Activated B cell treated with CpG ODN at 0.5 μM for 24 hours (primary cell): ENCODE measurements at regions of chr19 and their contacts with region 1.

Region 1: DNA sequence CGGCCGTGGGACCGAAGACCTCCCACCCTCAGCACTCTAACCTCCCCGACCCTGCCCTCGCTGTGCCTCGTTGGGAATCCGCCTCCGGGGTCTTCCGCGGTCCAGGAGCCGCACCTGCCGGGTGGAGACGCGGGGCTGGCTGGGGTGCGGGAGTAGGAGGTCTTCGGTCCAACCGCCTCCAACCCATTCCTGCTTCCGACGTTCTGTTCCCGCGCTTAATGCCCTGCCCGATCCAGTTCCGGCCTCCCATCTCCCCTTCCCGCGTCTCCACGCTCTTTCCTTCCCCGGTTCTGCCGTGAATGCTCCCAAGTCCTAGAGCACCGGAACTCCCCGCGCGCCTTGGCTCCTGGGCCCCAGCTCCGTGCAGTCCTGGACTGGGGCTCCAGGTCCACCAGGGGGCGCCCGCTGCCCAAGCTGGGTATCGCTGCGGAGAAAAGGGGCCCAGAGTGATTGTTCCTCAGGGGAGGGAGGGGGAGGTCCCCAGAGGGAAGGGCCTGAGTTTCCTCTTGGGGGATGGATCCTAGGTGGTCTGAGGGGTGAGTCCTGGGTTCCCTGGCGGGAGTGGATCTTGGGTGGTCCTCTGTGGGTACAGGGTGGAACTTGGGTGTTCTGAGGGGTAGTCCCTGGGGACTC is 14.1 kb upstream of the TNFSF9 start:
- DNase-seq: peak; percentile 92
- ATAC-seq: peak; percentile 63
- H3K4me3 Mint-ChIP-seq: peak overlapping the region; percentile 97
- H3K27ac Mint-ChIP-seq: peak overlapping the region; percentile 59
- H3K4me1 Mint-ChIP-seq: peaks cover 45% of the 10 kb centered on the region
- H3K27me3 Mint-ChIP-seq: no peaks in the 10 kb centered on the region
- CTCF ChIP-seq: peak; percentile 84

Region 2: DNA sequence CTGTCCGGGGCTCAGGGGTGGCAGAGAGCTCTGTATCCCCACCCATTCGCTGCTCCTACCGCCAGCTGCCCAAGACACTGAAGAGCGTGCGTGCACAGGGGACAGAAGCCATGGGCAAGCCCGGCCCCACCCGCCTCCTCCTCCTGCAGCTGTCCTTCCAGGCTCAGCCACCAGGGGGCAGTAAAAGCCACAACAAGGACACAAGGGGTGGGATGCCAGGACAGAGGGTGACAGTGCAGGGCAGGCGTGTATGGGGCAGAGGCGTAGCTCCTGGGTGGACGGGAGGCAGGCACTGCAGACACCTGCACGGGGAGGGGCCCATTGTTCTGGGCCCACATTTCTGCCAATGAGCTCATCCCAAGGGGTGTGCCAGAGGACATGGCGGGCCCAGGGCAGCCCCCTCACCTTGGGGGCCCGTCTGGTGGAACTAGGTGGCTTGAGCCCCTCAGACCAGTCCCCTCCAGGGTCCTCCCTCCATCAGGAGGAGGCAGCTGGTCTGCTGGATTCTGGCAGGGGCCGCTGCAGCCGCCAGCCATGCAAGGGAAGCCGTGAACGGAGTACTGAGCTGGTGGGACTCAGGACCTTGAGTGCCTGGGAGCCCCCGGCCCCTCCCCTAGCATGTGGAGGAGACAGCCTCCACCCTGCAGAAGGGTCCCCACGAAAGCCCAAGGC is 298.1 kb before region 1 on chr19:
- CTCF ChIA-PET with region 1: interaction called, 5 read pairs
- POLR2A ChIA-PET with region 1: no interaction called
- intact Hi-C with region 1: loop called (anchors 5 kb)
- DNase-seq: peak; percentile 79
- ATAC-seq: peak; percentile 90
- H3K4me3 Mint-ChIP-seq: no peak overlapping the region
- H3K27ac Mint-ChIP-seq: no peak overlapping the region
- H3K4me1 Mint-ChIP-seq: no peaks in the 10 kb centered on the region
- H3K27me3 Mint-ChIP-seq: no peaks in the 10 kb centered on the region
- CTCF ChIP-seq: no peak

Region 3: DNA sequence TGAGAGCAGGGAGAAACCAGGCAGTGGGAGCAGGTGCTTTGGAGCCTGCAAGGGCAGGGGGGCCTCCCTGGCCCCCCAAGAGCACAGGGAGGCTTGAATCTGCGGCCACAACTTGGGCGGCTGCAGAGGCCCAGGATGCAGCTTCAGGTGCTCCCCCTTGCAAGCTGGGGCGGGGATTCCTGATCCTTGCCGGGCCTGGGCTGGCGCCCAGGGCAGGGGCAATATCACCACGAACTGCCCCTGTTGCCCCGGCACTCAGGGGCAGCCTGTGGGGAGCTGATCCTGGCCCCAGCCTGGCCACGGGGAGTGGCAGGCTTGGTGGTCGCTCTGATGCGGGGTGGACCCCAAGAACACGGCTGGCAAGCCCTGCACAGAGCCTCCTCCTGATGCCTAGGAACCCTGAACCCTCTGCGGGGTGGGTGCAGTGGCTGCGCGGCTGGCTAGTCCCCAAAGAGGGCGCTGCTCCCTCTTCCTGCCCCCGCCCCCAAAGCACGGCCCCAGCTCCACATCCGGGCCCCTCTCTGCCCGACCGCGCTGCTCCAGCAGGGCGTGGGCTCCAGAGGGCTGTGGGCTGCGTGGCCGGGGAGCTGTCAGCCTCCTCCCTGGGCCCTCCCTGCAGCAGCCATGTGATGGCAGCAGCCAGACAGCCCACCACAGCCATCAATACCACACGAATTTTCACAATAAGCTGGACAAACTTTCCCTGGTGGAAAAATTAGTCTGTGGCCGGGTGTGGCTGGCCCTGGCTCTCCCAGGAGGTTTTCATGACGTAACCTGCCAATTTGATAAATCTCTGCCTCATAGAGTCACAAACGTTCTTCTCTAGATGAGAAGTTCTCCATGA is 35.1 kb after region 1 on chr19:
- CTCF ChIA-PET with region 1: interaction called, 8 read pairs
- POLR2A ChIA-PET with region 1: interaction called, 5 read pairs
- intact Hi-C with region 1: loop called (anchors 5 kb)
- DNase-seq: peak; percentile 35
- ATAC-seq: peak; percentile 88
- H3K4me3 Mint-ChIP-seq: peak overlapping the region; percentile 19
- H3K27ac Mint-ChIP-seq: no peak overlapping the region
- H3K4me1 Mint-ChIP-seq: peaks cover 9% of the 10 kb centered on the region
- H3K27me3 Mint-ChIP-seq: no peaks in the 10 kb centered on the region
- CTCF ChIP-seq: no peak

Region 4: DNA sequence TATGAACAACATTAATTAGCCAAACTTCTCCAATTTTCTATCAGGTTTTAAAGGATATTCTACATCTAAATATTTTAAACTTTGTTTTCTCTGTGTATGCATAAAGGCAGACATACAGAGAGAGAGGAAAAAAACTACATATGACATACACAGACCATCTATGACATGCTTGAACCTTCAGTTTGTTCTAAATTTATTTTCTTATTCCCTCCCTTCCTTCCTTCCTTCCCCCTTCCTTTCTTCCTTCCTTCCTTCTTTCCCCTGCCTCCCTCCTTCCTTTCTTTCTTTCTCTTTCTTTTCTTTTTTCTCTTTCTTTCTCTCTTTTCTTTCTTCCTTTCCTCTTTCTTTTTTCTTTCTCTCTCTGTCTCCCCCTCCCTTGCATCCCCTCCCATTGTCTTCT is 110.0 kb after region 1 on chr19:
- CTCF ChIA-PET with region 1: interaction called, 72 read pairs
- POLR2A ChIA-PET with region 1: interaction called, 24 read pairs
- intact Hi-C with region 1: no loop called
- DNase-seq: no peak
- ATAC-seq: no peak
- H3K4me3 Mint-ChIP-seq: no peak overlapping the region
- H3K27ac Mint-ChIP-seq: no peak overlapping the region
- H3K4me1 Mint-ChIP-seq: peaks cover 16% of the 10 kb centered on the region
- H3K27me3 Mint-ChIP-seq: peaks cover 3% of the 10 kb centered on the region
- CTCF ChIP-seq: no peak

Region 5: DNA sequence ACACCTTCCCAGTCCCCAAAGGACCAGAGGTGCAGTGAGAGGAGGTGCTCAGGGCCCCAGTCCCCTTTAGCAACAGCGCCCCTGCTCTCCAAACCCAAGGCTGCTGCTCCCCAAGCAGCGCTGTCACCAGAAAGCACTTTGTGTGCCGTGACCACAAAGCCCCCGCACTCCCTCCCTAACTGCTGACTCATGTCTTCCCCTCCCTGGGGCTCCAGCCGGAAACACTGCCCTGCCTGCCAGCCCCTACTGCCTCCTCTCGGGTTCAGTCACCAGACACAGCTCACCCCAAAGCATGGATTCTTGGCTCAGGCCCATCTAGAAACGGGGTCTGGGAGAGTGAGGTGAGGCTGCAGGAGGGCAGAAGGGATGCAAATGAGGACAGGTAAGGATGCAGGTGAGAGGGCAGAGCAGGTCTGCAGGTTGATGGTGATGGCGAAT is 158.1 kb after region 1 on chr19:
- CTCF ChIA-PET with region 1: no interaction called
- POLR2A ChIA-PET with region 1: no interaction called
- intact Hi-C with region 1: loop called (anchors 1 kb)
- DNase-seq: peak; percentile 50
- ATAC-seq: peak; percentile 69
- H3K4me3 Mint-ChIP-seq: no peak overlapping the region
- H3K27ac Mint-ChIP-seq: peak overlapping the region; percentile 7
- H3K4me1 Mint-ChIP-seq: peaks cover 30% of the 10 kb centered on the region
- H3K27me3 Mint-ChIP-seq: peaks cover 20% of the 10 kb centered on the region
- CTCF ChIP-seq: no peak

Region 6: DNA sequence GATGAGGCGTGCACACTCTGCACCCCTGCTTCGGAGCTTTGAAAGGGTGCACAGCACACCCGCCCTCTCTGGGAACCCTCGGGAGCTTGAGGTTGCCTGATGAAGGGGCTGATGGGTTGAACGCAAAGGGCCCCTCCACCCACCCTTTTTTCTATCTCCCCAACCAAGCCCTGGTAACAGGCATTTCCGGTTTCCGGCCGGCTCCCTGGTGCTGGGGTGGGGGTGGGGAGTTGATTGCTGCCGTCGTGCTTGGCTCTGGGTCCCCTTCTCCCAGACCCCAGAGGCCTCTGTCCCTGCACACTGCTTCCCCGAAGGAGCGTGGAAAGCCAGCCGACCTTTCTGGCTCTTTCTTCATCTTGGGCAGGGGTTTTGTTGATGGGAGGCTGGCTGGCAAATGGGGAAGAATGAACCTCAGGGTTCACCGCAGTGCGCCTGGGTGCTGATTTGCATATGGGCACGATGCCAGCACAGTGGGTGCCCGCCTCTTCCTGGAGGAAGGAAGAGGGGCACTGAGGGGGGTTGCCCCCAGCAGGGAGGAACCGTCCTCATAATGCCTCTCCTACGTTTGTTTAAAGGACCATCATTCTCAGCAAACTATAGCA is 284.8 kb after region 1 on chr19:
- CTCF ChIA-PET with region 1: interaction called, 4 read pairs
- POLR2A ChIA-PET with region 1: interaction called, 4 read pairs
- intact Hi-C with region 1: loop called (anchors 1 kb)
- DNase-seq: peak; percentile 89
- ATAC-seq: peak; percentile 71
- H3K4me3 Mint-ChIP-seq: peak overlapping the region; percentile 83
- H3K27ac Mint-ChIP-seq: peak overlapping the region; percentile 94
- H3K4me1 Mint-ChIP-seq: peaks cover 83% of the 10 kb centered on the region
- H3K27me3 Mint-ChIP-seq: no peaks in the 10 kb centered on the region
- CTCF ChIP-seq: no peak